Astrocyte of the cerebellum (primary cell): ENCODE measurements at regions of chr7 and their contacts with region 1.

Region 1: GRCh38 chr7:3482147-3482964 is 181.3 kb downstream of the SDK1 start:
- DNase-seq: peak; percentile 40
- H3K4me3 ChIP-seq: no peak overlapping the region
- CTCF ChIP-seq: peak; percentile 74

Region 2: DNA sequence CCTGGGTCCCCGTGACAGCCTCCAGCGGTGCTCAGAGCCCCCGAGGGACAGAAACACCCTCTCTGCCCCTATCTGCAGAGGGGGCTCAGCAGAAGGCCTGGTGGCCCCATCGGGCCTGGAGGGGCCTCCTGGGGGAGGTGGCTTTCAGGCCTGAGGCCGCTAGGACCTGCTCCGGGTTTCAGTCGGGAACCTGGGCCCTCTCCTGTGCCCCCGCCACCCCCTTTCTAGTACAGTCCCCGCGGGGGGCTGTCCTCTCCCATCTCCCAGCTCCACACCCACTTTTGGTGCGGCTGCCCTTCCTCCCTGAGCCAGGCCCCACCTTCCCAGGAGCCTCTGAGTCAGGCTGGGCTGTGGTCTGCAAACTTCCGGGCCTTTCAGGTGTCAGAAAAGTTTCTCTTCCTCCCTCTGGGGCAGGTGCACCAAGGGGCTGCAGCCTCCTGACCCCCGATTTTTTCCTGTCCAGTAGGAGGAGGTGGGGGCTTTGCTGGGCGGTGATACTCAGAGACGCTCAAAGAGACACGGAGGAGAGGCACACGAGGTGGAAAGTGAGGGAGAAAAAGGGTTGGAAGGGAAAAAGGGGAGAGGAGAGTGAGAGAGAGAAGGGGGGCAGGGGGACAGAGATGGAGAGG is 439.4 kb before region 1 on chr7:
- in situ Hi-C with region 1: no loop called
- DNase-seq: no peak
- H3K4me3 ChIP-seq: no peak overlapping the region
- CTCF ChIP-seq: no peak

Region 3: GRCh38 chr7:3267966-3268690 is 214.2 kb before region 1 on chr7:
- in situ Hi-C with region 1: no loop called
- DNase-seq: peak; percentile 84
- H3K4me3 ChIP-seq: no peak overlapping the region
- CTCF ChIP-seq: no peak

Region 4: GRCh38 chr7:3309140-3309539 is 173.2 kb before region 1 on chr7:
- in situ Hi-C with region 1: loop called (anchors 5 kb)
- DNase-seq: no peak
- H3K4me3 ChIP-seq: no peak overlapping the region
- CTCF ChIP-seq: no peak

Region 5: DNA sequence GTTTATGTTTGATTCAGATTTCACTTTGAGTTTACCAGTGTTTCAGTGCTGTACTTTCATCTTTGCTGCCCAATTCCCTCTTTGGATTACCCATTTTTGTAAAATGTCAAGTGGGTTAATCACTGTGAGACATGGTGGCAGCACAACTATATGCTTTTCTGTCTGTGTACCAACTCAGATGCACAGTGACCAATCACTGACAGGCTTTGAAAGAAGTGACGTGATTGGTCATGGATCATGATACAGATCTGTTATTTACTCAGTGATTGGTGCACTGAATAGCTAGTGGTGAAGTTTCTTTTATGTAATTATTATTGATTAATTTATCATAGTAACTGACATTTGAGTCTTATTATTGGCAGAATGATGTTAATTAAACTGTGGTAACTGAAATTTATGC is 54.4 kb before region 1 on chr7:
- in situ Hi-C with region 1: loop called (anchors 5 kb)
- DNase-seq: no peak
- H3K4me3 ChIP-seq: no peak overlapping the region
- CTCF ChIP-seq: no peak

Region 6: DNA sequence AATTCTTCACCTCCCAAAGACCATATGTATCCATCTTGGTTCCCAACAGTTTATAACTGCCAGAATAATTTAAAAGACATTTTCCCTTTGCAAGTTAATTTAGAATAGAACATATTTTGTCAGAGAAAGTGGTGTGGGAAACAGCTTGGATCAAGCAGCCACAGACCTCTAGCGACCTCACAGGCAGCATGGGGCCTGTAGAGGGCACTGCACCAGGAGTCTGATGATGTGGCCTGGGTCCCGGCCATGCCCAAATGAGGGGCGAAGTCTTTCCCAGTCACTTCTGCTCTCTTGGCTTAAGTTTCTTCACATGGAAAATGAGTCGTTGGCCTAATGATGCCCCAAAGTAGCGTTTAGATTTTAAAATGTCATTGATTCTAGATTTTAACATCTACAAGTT is 61.8 kb after region 1 on chr7:
- in situ Hi-C with region 1: loop called (anchors 5 kb)
- DNase-seq: no peak
- H3K4me3 ChIP-seq: no peak overlapping the region
- CTCF ChIP-seq: no peak